Heart right ventricle (tissue), 16 donors: ENCODE measurements at regions of chr1 and their contacts with region 1.

Region 1: GRCh38 chr1:198275597-198275996 is 118.8 kb downstream of the NEK7 start:
- DNase-seq: no peak
- ATAC-seq: no peak
- H3K4me3 ChIP-seq: no peak overlapping the region
- H3K27ac ChIP-seq: no peak overlapping the region
- H3K4me1 ChIP-seq: peaks cover 0 to 60% (median 28%) of the 10 kb centered on the region in 9 donors
- H3K27me3 ChIP-seq: no peaks in the 10 kb centered on the region
- CTCF ChIP-seq: peak in 2 of 9 donors; percentile 14 to 23

Region 2: GRCh38 chr1:198201956-198202784 is 73.4 kb before region 1 on chr1:
- intact Hi-C with region 1: loop called in 1 of 10 experiments (anchors 10 kb)
- DNase-seq: no peak
- ATAC-seq: peak in 5 of 8 donors; percentile 26 to 70 (median 51)
- H3K4me3 ChIP-seq: no peak overlapping the region
- H3K27ac ChIP-seq: peak overlapping the region in 8 of 10 donors; percentile 22 to 48 (median 32)
- H3K4me1 ChIP-seq: peaks cover 0 to 95% (median 62%) of the 10 kb centered on the region in 9 donors
- H3K27me3 ChIP-seq: no peaks in the 10 kb centered on the region
- CTCF ChIP-seq: no peak

Region 3: DNA sequence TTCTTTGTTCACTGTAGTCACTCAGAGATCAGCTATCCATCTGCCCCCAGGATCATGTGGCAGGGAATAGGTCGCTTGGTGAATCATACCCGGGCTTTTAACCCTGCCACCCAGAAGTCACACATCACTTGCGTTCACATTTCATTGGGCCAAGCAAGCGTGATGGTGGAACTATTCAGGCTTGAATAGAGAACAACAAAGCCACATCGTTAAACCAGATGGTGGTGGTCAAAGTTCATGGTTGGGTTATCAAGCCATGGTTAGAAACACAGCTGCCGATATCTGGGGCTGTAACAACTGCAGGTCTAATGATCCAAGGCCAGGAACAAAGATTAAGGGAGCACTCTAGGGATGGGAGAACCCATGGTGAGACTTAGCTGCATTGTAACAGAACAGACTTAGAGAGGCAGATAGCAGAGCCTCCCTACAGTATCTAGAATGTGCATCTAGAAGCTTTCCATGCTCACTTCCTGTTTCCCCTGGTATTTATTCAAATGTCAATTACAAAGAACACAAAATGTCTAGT is 323.3 kb after region 1 on chr1:
- intact Hi-C with region 1: no loop called
- DNase-seq: no peak
- ATAC-seq: no peak
- H3K4me3 ChIP-seq: peak overlapping the region in 1 of 10 donors; percentile 3
- H3K27ac ChIP-seq: peak overlapping the region in 1 of 10 donors; percentile 4
- H3K4me1 ChIP-seq: peaks cover 0 to 12% (median 0%) of the 10 kb centered on the region in 9 donors
- H3K27me3 ChIP-seq: peaks cover 0 to 3% (median 0%) of the 10 kb centered on the region in 7 donors
- CTCF ChIP-seq: no peak